ENCODE measurements at regions of chr1 and their contacts with region 1.

Region 1: GRCh38 chr1:69737527-69738185 is 169.9 kb downstream of the LRRC7 start:
- DNase-seq: peak; percentile 11
- ATAC-seq: peak; percentile 90
- H3K4me3 ChIP-seq: no peak overlapping the region
- H3K27ac ChIP-seq: no peak overlapping the region
- H3K4me1 ChIP-seq: no peaks in the 10 kb centered on the region
- H3K27me3 ChIP-seq: no peaks in the 10 kb centered on the region
- CTCF ChIP-seq: peak; percentile 60 to 66 (median 63); a peak in 5 of 6 replicates
- EP300 ChIP-seq: no peak
- POLR2A ChIP-seq: no peak
- RAD21 ChIP-seq: peak; percentile 88

Region 2: DNA sequence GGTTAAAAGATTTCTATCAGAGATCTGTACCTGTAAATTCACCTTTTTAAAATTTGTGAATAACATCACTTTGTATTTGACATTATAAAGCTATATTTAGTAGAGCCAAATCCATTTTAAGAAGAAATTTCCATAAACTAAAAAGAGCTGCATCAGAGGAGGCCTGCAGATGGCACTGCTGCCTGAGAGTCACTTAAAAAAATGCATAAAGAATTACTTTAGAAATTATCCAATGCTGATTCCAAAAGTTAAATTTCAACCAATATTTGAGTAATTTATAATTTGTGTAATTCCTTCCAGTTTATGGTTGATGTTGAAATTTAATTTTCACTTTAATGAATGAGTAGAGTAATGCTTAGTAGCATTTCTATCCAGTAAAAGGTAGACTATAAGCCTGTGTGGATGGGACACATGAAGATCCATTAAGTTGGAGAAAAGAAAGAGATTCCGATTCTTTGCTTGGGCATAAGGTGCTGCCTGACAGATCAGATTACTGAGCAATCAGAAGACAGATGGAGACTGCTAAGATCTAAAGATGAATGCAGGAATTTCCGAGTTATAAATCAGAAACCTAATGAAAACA is 1267.2 kb before region 1 on chr1:
- CTCF ChIA-PET with region 1: interaction called, 10 read pairs
- POLR2A ChIA-PET with region 1: no interaction called
- RAD21 ChIA-PET with region 1: interaction called, 3 read pairs
- SMC1A ChIA-PET with region 1: interaction called, 6 read pairs
- in situ Hi-C with region 1: loop called (anchors 25 kb)
- intact Hi-C with region 1: loop called (anchors 1 kb)
- DNase-seq: no peak
- ATAC-seq: no peak
- H3K4me3 ChIP-seq: no peak overlapping the region
- H3K27ac ChIP-seq: no peak overlapping the region
- H3K4me1 ChIP-seq: no peaks in the 10 kb centered on the region
- H3K27me3 ChIP-seq: no peaks in the 10 kb centered on the region
- CTCF ChIP-seq: peak; percentile 41 to 46 (median 45); a peak in 4 of 6 replicates
- EP300 ChIP-seq: no peak
- POLR2A ChIP-seq: no peak
- RAD21 ChIP-seq: peak; percentile 50

Region 3: GRCh38 chr1:68600049-68600661 is 1137.5 kb before region 1 on chr1:
- CTCF ChIA-PET with region 1: interaction called, 5 read pairs
- POLR2A ChIA-PET with region 1: no interaction called
- RAD21 ChIA-PET with region 1: interaction called, 4 read pairs
- SMC1A ChIA-PET with region 1: interaction called, 4 read pairs
- in situ Hi-C with region 1: loop called (anchors 25 kb)
- intact Hi-C with region 1: loop called (anchors 1 kb)
- DNase-seq: no peak
- ATAC-seq: peak; percentile 50; the same call in 1 of the 3 replicates
- H3K4me3 ChIP-seq: no peak overlapping the region
- H3K27ac ChIP-seq: no peak overlapping the region
- H3K4me1 ChIP-seq: no peaks in the 10 kb centered on the region
- H3K27me3 ChIP-seq: no peaks in the 10 kb centered on the region
- CTCF ChIP-seq: peak; percentile 32 to 44 (median 42); a peak in 4 of 6 replicates
- EP300 ChIP-seq: no peak
- POLR2A ChIP-seq: no peak
- RAD21 ChIP-seq: peak; percentile 64

Region 4: DNA sequence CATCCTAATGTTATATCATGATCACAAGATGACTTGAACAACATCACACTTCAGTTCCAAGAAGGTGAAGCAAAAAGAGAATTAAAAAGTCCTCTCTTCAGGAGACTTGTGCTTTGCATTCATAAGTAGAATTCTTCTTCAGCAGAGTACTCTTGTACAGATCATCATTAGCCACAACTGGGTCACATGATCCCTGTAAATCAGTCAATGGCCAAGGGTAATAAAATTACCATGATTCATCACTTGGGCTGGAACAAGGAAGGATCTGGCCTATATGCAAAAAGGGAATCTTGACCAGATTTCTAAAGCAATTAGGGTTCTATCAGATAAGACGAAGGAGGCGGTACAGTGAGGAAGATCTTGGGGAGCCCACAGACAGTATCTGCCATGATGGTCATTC is 782.8 kb before region 1 on chr1:
- CTCF ChIA-PET with region 1: no interaction called
- POLR2A ChIA-PET with region 1: no interaction called
- RAD21 ChIA-PET with region 1: no interaction called
- SMC1A ChIA-PET with region 1: no interaction called
- in situ Hi-C with region 1: no loop called
- intact Hi-C with region 1: no loop called
- DNase-seq: no peak
- ATAC-seq: no peak
- H3K4me3 ChIP-seq: no peak overlapping the region
- H3K27ac ChIP-seq: no peak overlapping the region
- H3K4me1 ChIP-seq: no peaks in the 10 kb centered on the region
- H3K27me3 ChIP-seq: no peaks in the 10 kb centered on the region
- CTCF ChIP-seq: no peak
- EP300 ChIP-seq: no peak
- POLR2A ChIP-seq: no peak
- RAD21 ChIP-seq: no peak

Region 5: DNA sequence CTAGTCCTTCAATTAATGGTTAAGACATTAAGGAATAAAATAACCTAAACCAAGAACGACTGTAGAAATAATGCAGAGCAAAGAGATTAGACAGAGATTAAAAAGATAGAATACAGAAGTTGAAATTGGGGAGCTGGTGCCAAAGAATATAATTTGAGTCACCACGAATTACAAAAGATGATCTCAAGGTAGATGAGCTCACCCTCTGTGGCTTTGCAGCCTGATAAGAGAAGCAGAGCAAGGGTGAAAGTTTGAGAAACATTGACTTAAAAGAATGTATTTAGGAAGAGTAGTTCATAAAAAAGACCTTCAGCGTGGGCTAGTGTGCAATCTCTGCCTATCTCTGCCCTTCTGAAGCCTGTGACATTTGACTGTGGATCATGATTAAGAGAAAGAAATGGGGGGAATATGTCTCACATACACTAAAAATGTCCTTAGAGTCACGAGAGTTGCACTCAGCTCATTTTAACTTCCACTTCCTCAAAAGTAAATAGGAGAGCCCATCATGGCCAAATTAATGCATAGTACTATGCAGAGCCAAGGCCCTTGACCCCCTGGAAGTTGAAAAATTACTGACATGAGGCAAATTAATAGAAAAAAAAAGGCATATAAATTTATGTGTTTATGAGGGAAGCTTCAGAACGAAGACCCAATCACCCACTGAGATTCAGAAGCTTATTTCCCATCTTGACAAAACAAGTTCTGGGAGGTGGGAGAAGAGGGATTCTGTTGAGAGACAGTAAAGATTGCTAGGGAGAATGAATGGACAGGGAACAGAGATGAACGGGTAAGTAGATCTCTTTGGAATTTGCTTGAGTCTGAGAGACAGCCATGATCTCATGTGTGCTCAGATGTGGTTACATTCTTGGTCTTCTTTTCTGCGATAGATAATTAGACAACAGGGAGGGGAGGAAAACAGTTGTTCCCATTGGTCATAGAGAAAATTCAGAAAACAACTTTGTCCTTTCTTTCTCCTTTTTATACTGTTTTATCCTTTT is 565.4 kb before region 1 on chr1:
- CTCF ChIA-PET with region 1: no interaction called
- POLR2A ChIA-PET with region 1: no interaction called
- RAD21 ChIA-PET with region 1: no interaction called
- SMC1A ChIA-PET with region 1: interaction called, 3 read pairs
- in situ Hi-C with region 1: no loop called
- intact Hi-C with region 1: loop called (anchors 10 kb)
- DNase-seq: no peak
- ATAC-seq: peak; percentile 61
- H3K4me3 ChIP-seq: no peak overlapping the region
- H3K27ac ChIP-seq: no peak overlapping the region
- H3K4me1 ChIP-seq: no peaks in the 10 kb centered on the region
- H3K27me3 ChIP-seq: no peaks in the 10 kb centered on the region
- CTCF ChIP-seq: no peak
- EP300 ChIP-seq: no peak
- POLR2A ChIP-seq: no peak
- RAD21 ChIP-seq: no peak

Region 6: DNA sequence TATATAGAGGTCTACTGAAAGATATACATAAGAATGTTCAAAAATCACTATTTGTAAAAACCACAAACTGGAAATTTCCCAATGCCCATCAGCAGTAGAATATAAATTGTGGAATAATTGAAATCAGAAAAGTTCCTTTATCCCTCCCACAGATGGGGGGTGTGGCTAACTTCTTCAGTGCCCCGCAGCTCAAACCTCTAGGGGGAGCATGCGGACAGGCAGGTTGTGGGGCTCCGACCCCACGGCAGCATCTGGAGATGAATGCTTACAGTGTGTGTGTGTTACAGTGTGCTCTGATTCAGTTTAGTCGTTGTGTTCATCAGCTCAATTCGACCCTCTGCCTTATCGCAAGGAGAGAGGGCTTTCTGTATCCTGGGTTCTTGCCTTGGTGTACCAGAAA is 432.0 kb before region 1 on chr1:
- CTCF ChIA-PET with region 1: no interaction called
- POLR2A ChIA-PET with region 1: no interaction called
- RAD21 ChIA-PET with region 1: no interaction called
- SMC1A ChIA-PET with region 1: no interaction called
- in situ Hi-C with region 1: no loop called
- intact Hi-C with region 1: loop called (anchors 10 kb)
- DNase-seq: no peak
- ATAC-seq: peak; percentile 91
- H3K4me3 ChIP-seq: no peak overlapping the region
- H3K27ac ChIP-seq: no peak overlapping the region
- H3K4me1 ChIP-seq: no peaks in the 10 kb centered on the region
- H3K27me3 ChIP-seq: no peaks in the 10 kb centered on the region
- CTCF ChIP-seq: peak in 2 of 3 experiments; percentile 23 to 24; a peak in 3 of 6 replicates
- EP300 ChIP-seq: no peak
- POLR2A ChIP-seq: no peak
- RAD21 ChIP-seq: peak; percentile 40

Region 7: DNA sequence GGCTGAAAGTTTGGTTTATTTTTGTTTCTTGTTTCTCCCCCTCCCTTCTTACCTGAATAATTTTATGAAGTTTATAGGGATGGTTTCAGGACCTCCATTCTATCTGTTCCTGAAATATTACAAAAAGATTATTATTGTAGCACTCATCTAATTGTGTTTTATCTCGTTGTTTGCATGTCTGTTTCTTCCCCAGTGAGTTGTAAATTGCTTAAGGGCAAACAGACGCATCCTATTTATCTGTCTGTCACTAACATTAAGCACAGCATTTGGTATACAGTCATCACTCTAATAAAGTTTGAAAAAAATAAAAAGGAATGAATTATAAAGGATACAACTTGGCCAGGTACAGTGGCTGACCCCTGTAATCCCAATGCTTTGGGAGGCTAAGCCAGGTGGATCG is 46.5 kb before region 1 on chr1:
- CTCF ChIA-PET with region 1: no interaction called
- POLR2A ChIA-PET with region 1: no interaction called
- RAD21 ChIA-PET with region 1: no interaction called
- SMC1A ChIA-PET with region 1: no interaction called
- in situ Hi-C with region 1: no loop called
- intact Hi-C with region 1: no loop called
- DNase-seq: no peak
- ATAC-seq: no peak
- H3K4me3 ChIP-seq: no peak overlapping the region
- H3K27ac ChIP-seq: no peak overlapping the region
- H3K4me1 ChIP-seq: no peaks in the 10 kb centered on the region
- H3K27me3 ChIP-seq: no peaks in the 10 kb centered on the region
- CTCF ChIP-seq: no peak
- EP300 ChIP-seq: no peak
- POLR2A ChIP-seq: no peak
- RAD21 ChIP-seq: no peak